H1 (cell line): ENCODE measurements at regions of chr20 and their contacts with region 1.

Region 1: GRCh38 chr20:11204926-11205768 is 531.3 kb upstream of the JAG1 start:
- DNase-seq: peak; percentile 33 to 55
- H3K4me3 ChIP-seq: no peak overlapping the region
- H3K27ac ChIP-seq: no peak overlapping the region
- H3K4me1 ChIP-seq: no peaks in the 10 kb centered on the region; a peak in 1 of 7 replicates
- H3K27me3 ChIP-seq: no peaks in the 10 kb centered on the region
- CTCF ChIP-seq: peak; percentile 45 to 98 (median 74)
- EP300 ChIP-seq: no peak
- POLR2A ChIP-seq: no peak
- RAD21 ChIP-seq: peak; percentile 84 to 86

Region 2: GRCh38 chr20:10696650-10697049 is 508.5 kb before region 1 on chr20:
- CTCF ChIA-PET with region 1: interaction called, 13 read pairs
- POLR2A ChIA-PET with region 1: no interaction called
- DNase-seq: peak; percentile 15 to 87
- H3K4me3 ChIP-seq: no peak overlapping the region
- H3K27ac ChIP-seq: no peak overlapping the region
- H3K4me1 ChIP-seq: peaks cover 0 to 4% (median 2%) of the 10 kb centered on the region in 4 experiments; a peak in 3 of 7 replicates
- H3K27me3 ChIP-seq: no peaks in the 10 kb centered on the region
- CTCF ChIP-seq: peak; percentile 56 to 87 (median 73)
- EP300 ChIP-seq: no peak
- POLR2A ChIP-seq: no peak
- RAD21 ChIP-seq: peak; percentile 51 to 70

Region 3: GRCh38 chr20:11216451-11217314 is 11.5 kb after region 1 on chr20:
- CTCF ChIA-PET with region 1: interaction called, 16 read pairs
- POLR2A ChIA-PET with region 1: interaction called, 3 read pairs
- DNase-seq: no peak
- H3K4me3 ChIP-seq: no peak overlapping the region
- H3K27ac ChIP-seq: no peak overlapping the region
- H3K4me1 ChIP-seq: peaks cover 0 to 4% (median 0%) of the 10 kb centered on the region in 4 experiments; a peak in 1 of 7 replicates
- H3K27me3 ChIP-seq: peaks cover 0 to 1% (median 0%) of the 10 kb centered on the region in 4 experiments; a peak in 2 of 7 replicates
- CTCF ChIP-seq: no peak
- EP300 ChIP-seq: no peak
- POLR2A ChIP-seq: no peak
- RAD21 ChIP-seq: no peak